Activated CD4-positive, alpha-beta memory T cell treated with anti-CD3 and anti-CD28 coated beads for 36 hours (primary cell): ENCODE measurements at regions of chr7 and their contacts with region 1.

Region 1: DNA sequence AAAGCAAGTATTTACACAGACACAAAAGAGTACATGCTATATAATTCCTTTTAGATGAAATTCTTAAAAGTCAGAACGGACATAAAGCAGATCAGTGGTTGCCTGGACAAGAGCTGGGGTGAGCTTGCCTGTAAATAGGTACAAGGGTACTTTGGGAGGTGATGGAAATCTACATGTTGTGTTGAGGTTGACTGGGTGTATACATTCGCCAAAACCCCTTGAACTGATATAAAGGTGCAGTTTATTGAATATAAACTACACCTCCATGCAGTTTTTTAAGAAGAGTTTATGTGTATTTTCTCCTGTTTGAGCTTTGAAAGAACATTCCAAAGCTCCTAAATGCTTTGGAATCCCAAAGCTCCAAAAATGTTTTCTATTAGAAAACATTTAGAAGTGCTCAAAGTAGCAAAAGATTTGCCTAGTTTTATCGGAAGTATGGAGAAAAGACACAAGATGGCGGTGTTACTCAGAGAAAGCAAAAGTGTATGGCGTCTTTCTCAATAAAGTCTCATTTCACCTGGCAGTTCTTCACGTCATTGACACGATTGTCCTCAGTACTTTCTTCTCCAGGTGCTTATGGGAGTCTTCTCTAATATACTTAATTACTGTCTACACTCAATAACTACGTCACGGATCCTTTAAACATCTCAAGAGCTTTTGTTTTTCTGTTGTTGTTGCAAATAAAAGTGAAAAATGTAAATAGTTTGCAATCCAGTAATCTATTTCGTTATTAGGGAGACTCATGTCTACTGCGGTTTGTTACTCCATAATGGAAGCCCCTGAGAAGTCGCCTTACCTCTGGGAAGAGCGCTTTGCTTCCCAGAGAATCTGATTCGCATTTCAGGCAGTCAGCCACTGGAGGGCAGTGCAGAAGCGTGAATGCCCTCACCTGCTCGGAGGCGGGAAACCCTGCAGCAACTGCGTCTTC is 14.7 kb upstream of the SEC61G start:
- DNase-seq: peak; percentile 80
- H3K4me3 Mint-ChIP-seq: peak overlapping the region; percentile 64
- H3K27ac Mint-ChIP-seq: no peak overlapping the region
- H3K4me1 Mint-ChIP-seq: peaks cover 5% of the 10 kb centered on the region
- H3K27me3 Mint-ChIP-seq: peaks cover 9% of the 10 kb centered on the region

Region 2: DNA sequence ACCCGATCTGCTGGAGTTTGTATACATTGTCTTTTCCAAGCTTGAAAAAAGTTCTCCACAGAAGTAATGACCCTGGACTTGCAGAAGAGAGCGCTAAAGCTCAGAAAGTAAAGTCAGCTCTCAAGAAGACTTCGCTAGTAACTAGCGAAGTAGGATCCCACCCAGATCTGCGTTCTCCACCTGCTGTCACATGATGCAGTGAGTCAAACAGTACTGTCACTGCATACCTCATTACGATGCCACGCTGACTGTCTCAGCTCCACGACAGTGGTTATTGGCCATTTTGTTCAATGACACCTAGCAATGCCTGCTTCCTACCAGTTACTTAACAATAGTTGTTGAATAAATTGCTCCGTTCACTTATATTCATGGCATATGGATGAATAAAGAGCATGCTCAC is 14.9 kb after region 1 on chr7:
- CTCF ChIA-PET with region 1: interaction called, 15 read pairs
- POLR2A ChIA-PET with region 1: no interaction called
- intact Hi-C with region 1: no loop called
- DNase-seq: peak; percentile 57
- H3K4me3 Mint-ChIP-seq: no peak overlapping the region
- H3K27ac Mint-ChIP-seq: no peak overlapping the region
- H3K4me1 Mint-ChIP-seq: peaks cover 5% of the 10 kb centered on the region
- H3K27me3 Mint-ChIP-seq: peaks cover 44% of the 10 kb centered on the region

Region 3: DNA sequence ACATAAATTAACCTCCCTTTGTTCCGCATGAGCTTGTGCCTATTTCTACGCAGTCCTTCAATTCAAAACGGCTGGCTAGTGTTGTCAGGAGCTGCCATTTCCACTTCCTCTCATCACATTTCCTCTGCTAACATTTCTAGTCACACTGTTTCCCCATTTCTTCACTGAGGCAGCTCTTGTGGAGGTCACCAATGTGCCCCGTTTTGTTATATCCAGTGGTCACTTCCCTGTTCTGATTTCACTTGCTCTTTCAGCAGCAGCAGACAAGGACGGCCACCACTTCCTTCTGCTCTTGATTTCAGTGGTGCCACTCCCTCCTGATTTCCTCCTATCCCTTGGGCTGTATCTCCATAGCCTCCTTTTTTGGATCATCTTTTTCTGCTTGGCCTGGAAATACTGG is 50.0 kb after region 1 on chr7:
- CTCF ChIA-PET with region 1: no interaction called
- POLR2A ChIA-PET with region 1: no interaction called
- intact Hi-C with region 1: no loop called
- DNase-seq: no peak
- H3K4me3 Mint-ChIP-seq: no peak overlapping the region
- H3K27ac Mint-ChIP-seq: no peak overlapping the region
- H3K4me1 Mint-ChIP-seq: no peaks in the 10 kb centered on the region
- H3K27me3 Mint-ChIP-seq: peaks cover 16% of the 10 kb centered on the region

Region 4: DNA sequence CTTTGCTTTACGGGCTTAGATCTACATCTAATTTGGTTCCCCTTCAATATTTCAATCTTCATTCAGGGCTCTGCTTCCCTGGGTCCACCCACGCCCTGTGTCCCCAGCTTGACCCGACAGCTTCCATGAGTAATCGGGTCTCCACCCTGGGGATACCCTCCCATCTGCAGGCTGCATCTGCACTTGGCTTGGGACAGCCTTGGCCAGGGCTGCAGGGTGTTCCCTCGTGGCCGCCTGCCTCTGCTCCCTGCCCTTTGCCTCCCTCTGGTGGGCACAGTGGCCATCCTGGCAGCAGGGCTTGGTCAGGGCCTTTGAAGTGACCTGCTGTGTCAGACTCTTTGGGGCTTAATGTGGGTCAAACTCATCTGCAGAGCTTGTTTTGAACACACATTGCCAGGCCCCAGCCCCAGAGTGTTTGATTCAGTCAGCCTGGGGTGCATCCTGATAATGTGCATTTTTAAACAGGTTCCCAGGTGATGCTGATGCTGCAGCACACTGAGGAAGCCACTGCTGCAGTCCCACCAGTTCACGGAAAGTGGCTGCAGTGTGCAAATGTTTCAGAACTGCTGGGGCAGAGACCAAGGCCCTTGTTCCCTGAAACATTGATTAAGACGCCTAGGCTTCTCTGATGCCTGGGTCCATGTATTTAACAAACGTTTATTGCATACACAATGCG is 65.9 kb after region 1 on chr7:
- CTCF ChIA-PET with region 1: interaction called, 5 read pairs
- POLR2A ChIA-PET with region 1: no interaction called
- intact Hi-C with region 1: loop called (anchors 2 kb)
- DNase-seq: peak; percentile 22
- H3K4me3 Mint-ChIP-seq: no peak overlapping the region
- H3K27ac Mint-ChIP-seq: no peak overlapping the region
- H3K4me1 Mint-ChIP-seq: peaks cover 3% of the 10 kb centered on the region
- H3K27me3 Mint-ChIP-seq: peaks cover 3% of the 10 kb centered on the region

Region 5: GRCh38 chr7:54921116-54921515 is 147.4 kb after region 1 on chr7:
- CTCF ChIA-PET with region 1: no interaction called
- POLR2A ChIA-PET with region 1: no interaction called
- intact Hi-C with region 1: no loop called
- DNase-seq: no peak
- H3K4me3 Mint-ChIP-seq: no peak overlapping the region
- H3K27ac Mint-ChIP-seq: no peak overlapping the region
- H3K4me1 Mint-ChIP-seq: no peaks in the 10 kb centered on the region
- H3K27me3 Mint-ChIP-seq: peaks cover 2% of the 10 kb centered on the region

Region 6: DNA sequence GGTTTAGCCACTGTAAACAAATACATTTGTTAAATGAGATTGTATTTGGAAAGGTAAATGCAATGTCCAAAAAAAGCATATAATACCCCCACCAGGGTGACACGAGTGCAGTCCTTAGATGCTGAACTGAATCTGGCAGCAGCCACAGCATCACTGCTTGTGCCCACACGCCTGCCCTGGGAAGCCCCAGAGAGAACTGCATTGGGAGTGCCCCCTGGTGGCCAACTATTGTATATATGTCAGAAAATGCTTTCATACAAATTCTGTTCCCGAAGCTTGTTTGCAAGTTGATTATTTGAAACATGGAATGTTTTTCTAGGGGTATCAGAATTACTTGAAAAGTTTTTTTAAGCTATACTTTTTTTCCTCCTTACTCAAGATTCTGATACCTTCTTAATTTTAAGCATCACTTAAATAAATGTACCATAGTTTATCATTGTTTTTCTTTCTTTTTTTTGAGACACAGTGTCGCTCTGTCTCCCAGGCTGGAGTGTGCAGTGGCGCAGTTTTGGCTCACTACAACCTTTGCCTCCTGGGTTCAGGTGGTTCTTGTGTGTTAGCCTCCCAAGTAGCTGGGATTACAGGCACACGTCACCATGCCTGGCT is 641.5 kb after region 1 on chr7:
- CTCF ChIA-PET with region 1: interaction called, 4 read pairs
- POLR2A ChIA-PET with region 1: no interaction called
- intact Hi-C with region 1: loop called (anchors 1 kb)
- DNase-seq: peak; percentile 85
- H3K4me3 Mint-ChIP-seq: no peak overlapping the region
- H3K27ac Mint-ChIP-seq: no peak overlapping the region
- H3K4me1 Mint-ChIP-seq: peaks cover 2% of the 10 kb centered on the region
- H3K27me3 Mint-ChIP-seq: no peaks in the 10 kb centered on the region